ENCODE measurements at regions of chr12 and their contacts with region 1.

Region 1: GRCh38 chr12:55996715-55997534 is at the start of gene SUOX:
- DNase-seq: peak; percentile 71
- ATAC-seq: peak; percentile 75
- H3K4me3 Mint-ChIP-seq: peak within 1 kb of the TSS; percentile 68
- H3K27ac Mint-ChIP-seq: peak within 1 kb of the TSS; percentile 48
- H3K4me1 Mint-ChIP-seq: peaks cover 37% of the 10 kb centered on the region
- H3K27me3 Mint-ChIP-seq: no peaks in the 10 kb centered on the region
- total RNA-seq, gene SUOX: 2.5 to 14.6 TPM

Region 2: GRCh38 chr12:55973598-55974307 is 23.2 kb before region 1 on chr12 and contains the start of gene RAB5B:
- CTCF ChIA-PET with region 1: interaction called, 25 read pairs
- DNase-seq: peak; percentile 100
- ATAC-seq: peak; percentile 93
- H3K4me3 Mint-ChIP-seq: no peak within 1 kb of the TSS
- H3K27ac Mint-ChIP-seq: no peak within 1 kb of the TSS
- H3K4me1 Mint-ChIP-seq: peaks cover 29% of the 10 kb centered on the region
- H3K27me3 Mint-ChIP-seq: no peaks in the 10 kb centered on the region
- total RNA-seq, gene RAB5B: 46.4 to 55.6 TPM

Region 3: GRCh38 chr12:56007564-56008559 is 10.9 kb after region 1 on chr12:
- CTCF ChIA-PET with region 1: interaction called, 28 read pairs
- DNase-seq: peak; percentile 71
- ATAC-seq: peak; percentile 88
- H3K4me3 Mint-ChIP-seq: peak overlapping the region; percentile 74
- H3K27ac Mint-ChIP-seq: peak overlapping the region; percentile 65
- H3K4me1 Mint-ChIP-seq: peaks cover 23% of the 10 kb centered on the region
- H3K27me3 Mint-ChIP-seq: peaks cover 3% of the 10 kb centered on the region

Region 4: DNA sequence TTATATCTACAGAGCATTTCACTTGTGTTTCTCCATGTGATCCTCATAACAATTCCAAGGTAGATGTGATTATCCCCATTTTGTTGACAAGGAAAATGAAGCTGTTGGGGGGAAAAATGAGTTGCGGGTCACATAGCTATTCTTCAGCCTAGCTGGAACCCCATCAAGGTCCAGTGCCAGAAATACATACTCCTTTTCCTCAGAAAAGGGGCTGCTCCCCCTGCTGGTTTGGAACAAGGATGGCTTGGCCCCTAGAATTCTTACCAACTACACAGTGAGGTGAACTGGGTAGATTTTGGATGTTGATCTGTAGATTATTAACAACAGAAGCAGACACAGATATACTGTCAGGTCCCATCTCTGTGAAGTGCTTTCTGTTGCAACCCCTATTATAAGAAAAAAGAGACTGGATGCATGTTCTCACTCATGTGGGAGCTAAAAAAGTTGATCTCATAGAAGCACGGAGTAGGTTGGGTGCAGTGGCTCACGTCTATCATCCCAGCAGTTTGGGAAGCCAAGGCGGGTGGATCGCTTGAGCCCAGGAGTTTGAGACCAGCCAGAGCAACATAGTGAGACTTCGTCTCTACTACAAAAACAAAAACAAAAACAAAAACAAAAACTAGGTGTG is 32.9 kb after region 1 on chr12:
- CTCF ChIA-PET with region 1: interaction called, 92 read pairs
- DNase-seq: peak; percentile 63
- ATAC-seq: peak; percentile 75
- H3K4me3 Mint-ChIP-seq: no peak overlapping the region
- H3K27ac Mint-ChIP-seq: no peak overlapping the region
- H3K4me1 Mint-ChIP-seq: peaks cover 44% of the 10 kb centered on the region
- H3K27me3 Mint-ChIP-seq: no peaks in the 10 kb centered on the region

Region 5: GRCh38 chr12:56104109-56104814 is 107.3 kb after region 1 on chr12 and contains the start of gene PA2G4:
- CTCF ChIA-PET with region 1: interaction called, 12 read pairs
- DNase-seq: peak; percentile 100
- ATAC-seq: peak; percentile 92
- H3K4me3 Mint-ChIP-seq: peak within 1 kb of the TSS; percentile 99
- H3K27ac Mint-ChIP-seq: peak within 1 kb of the TSS; percentile 98
- H3K4me1 Mint-ChIP-seq: peaks cover 44% of the 10 kb centered on the region
- H3K27me3 Mint-ChIP-seq: no peaks in the 10 kb centered on the region
- total RNA-seq, gene PA2G4: 293 to 364 TPM